PC-9 (cell line): ENCODE measurements at regions of chr15 and their contacts with region 1.

Region 1: GRCh38 chr15:34239151-34239808 is 14.5 kb downstream of the EMC4 start:
- DNase-seq: peak; percentile 58 to 91
- H3K4me3 ChIP-seq: peak overlapping the region; percentile 26; the same call in 1 of the 2 replicates
- H3K27ac ChIP-seq: peak overlapping the region; percentile 99
- H3K4me1 ChIP-seq: peaks cover 24% of the 10 kb centered on the region
- H3K27me3 ChIP-seq: no peaks in the 10 kb centered on the region
- CTCF ChIP-seq: no peak

Region 2: GRCh38 chr15:33985290-33985689 is 254.0 kb before region 1 on chr15:
- CTCF ChIA-PET with region 1: no interaction called
- POLR2A ChIA-PET with region 1: no interaction called
- intact Hi-C with region 1: no loop called
- DNase-seq: no peak
- H3K4me3 ChIP-seq: no peak overlapping the region
- H3K27ac ChIP-seq: no peak overlapping the region
- H3K4me1 ChIP-seq: no peaks in the 10 kb centered on the region; the same call in 1 of the 2 replicates
- H3K27me3 ChIP-seq: no peaks in the 10 kb centered on the region
- CTCF ChIP-seq: no peak

Region 3: GRCh38 chr15:34065941-34066340 is 173.3 kb before region 1 on chr15:
- CTCF ChIA-PET with region 1: no interaction called
- POLR2A ChIA-PET with region 1: no interaction called
- intact Hi-C with region 1: no loop called
- DNase-seq: no peak
- H3K4me3 ChIP-seq: no peak overlapping the region
- H3K27ac ChIP-seq: no peak overlapping the region
- H3K4me1 ChIP-seq: no peaks in the 10 kb centered on the region
- H3K27me3 ChIP-seq: no peaks in the 10 kb centered on the region
- CTCF ChIP-seq: no peak

Region 4: GRCh38 chr15:34079904-34080303 is 159.4 kb before region 1 on chr15:
- CTCF ChIA-PET with region 1: no interaction called
- POLR2A ChIA-PET with region 1: no interaction called
- intact Hi-C with region 1: no loop called
- DNase-seq: no peak
- H3K4me3 ChIP-seq: no peak overlapping the region
- H3K27ac ChIP-seq: no peak overlapping the region
- H3K4me1 ChIP-seq: no peaks in the 10 kb centered on the region
- H3K27me3 ChIP-seq: no peaks in the 10 kb centered on the region
- CTCF ChIP-seq: no peak

Region 5: GRCh38 chr15:34342737-34343575 is 103.7 kb after region 1 on chr15 and contains the starts of genes NOP10 and NUTM1:
- CTCF ChIA-PET with region 1: no interaction called
- POLR2A ChIA-PET with region 1: no interaction called
- intact Hi-C with region 1: loop called (anchors 1 kb)
- DNase-seq: peak; percentile 79 to 86
- H3K4me3 ChIP-seq: peak within 1 kb of the TSS; percentile 83
- H3K27ac ChIP-seq: peak within 1 kb of the TSS; percentile 81
- H3K4me1 ChIP-seq: peaks cover 11% of the 10 kb centered on the region; the same call in 1 of the 2 replicates
- H3K27me3 ChIP-seq: no peaks in the 10 kb centered on the region
- CTCF ChIP-seq: peak; percentile 93
- total RNA-seq, gene NOP10: 109 and 162 TPM in 2 replicates
- total RNA-seq, gene NUTM1: not detected in 2 replicates

Region 6: DNA sequence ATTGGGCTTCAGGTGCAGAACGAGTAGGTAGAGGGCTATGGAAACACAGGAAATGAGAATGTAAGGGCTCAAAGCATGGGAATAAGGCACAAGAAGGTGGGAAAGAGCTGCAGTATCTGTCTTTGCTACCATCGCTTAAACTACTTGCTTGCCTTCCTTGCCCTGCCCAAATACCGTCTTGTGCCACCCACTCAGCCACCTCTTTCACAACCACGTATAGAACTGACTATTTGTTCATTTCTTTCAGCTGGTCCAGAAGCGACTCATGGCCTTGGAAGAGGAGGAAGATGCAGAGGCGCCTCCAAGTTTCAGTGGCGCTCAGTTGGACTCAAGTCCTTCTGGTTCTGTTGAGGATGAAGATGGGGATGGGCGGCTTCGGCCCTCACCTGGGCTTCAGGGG is 116.0 kb after region 1 on chr15:
- CTCF ChIA-PET with region 1: no interaction called
- POLR2A ChIA-PET with region 1: no interaction called
- intact Hi-C with region 1: no loop called
- DNase-seq: no peak
- H3K4me3 ChIP-seq: no peak overlapping the region
- H3K27ac ChIP-seq: no peak overlapping the region
- H3K4me1 ChIP-seq: peaks cover 13% of the 10 kb centered on the region
- H3K27me3 ChIP-seq: no peaks in the 10 kb centered on the region
- CTCF ChIP-seq: no peak